ENCODE measurements at regions of chr20 and their contacts with region 1.

Region 1: DNA sequence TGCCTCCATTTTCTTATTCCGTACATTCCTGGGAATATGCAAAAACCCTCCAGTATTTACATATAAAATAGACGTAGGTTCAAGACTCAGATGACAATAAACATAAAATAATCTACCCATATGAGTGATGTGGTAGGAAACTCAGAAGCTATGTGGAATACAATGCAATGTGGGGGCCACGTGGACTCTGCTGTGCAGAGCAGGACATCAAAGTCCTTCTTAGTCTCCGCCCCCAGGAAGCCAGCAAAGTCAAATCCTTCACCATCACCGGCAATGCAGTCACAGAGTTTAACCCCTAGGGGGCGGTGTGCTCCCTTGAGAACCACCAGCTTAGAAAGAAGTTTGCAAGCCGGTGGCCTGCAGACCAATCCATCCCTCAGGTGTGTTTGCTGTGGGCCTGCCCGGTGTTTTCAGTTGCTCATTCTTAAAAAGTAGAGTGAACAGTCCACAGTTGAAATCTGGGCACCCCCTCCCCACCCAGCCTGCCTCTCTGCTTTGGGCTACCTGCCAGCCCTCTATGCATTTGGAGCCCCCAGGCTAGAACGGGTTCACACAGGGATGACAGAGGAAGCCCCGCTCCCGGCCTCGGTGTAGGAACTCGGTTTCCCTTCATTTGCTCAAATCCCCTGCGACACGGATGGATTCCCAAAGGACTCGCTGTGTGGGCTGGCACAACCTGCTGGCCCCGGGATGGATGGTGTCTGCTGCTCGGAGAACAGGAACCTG is 59.9 kb downstream of the SULF2 start:
- DNase-seq: peak; percentile 91
- H3K4me3 Mint-ChIP-seq: no peak overlapping the region
- H3K27ac Mint-ChIP-seq: no peak overlapping the region
- H3K4me1 Mint-ChIP-seq: peaks cover 22% of the 10 kb centered on the region
- H3K27me3 Mint-ChIP-seq: no peaks in the 10 kb centered on the region

Region 2: DNA sequence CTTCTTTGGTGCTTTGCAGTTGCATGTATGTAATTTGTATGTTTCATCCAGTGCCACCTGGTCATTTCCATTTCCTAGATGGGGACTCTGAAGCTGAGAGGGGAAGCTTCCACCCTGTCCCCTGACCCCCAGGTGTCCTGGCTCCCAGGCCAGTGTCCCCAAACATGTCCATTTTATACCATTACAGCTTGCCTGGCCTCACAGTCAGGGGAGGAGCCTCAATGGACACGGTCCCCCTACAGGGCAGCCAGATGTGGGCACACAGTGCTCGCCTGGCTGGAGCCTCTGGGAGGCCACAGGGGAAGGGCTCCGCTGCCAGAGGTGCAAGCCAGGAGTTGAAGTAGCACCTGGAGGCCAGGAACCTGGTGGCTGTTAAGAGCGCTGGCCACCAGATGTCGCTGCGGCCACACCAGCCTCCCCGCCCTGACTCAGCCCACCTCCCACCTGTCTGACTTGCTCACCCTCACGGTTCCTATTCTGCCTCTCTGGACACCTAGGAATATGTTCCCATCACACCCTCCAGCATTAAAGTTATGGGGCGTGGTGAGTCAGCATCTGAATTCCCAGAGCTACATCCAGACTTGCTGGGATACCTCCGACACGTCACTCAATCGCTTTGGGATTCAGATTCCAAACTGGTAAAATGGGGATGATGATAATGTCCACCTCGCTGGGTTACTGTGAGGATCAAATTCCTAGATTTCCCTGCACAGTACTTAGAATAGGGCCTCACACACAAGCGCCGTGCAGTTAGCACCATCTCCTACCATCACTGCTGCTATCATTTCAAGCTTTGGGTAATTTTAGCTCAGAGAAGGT is 47.6 kb before region 1 on chr20:
- CTCF ChIA-PET with region 1: interaction called, 4 read pairs
- intact Hi-C with region 1: loop called (anchors 5 kb)
- DNase-seq: peak; percentile 71
- H3K4me3 Mint-ChIP-seq: no peak overlapping the region
- H3K27ac Mint-ChIP-seq: no peak overlapping the region
- H3K4me1 Mint-ChIP-seq: no peaks in the 10 kb centered on the region
- H3K27me3 Mint-ChIP-seq: no peaks in the 10 kb centered on the region

Region 3: DNA sequence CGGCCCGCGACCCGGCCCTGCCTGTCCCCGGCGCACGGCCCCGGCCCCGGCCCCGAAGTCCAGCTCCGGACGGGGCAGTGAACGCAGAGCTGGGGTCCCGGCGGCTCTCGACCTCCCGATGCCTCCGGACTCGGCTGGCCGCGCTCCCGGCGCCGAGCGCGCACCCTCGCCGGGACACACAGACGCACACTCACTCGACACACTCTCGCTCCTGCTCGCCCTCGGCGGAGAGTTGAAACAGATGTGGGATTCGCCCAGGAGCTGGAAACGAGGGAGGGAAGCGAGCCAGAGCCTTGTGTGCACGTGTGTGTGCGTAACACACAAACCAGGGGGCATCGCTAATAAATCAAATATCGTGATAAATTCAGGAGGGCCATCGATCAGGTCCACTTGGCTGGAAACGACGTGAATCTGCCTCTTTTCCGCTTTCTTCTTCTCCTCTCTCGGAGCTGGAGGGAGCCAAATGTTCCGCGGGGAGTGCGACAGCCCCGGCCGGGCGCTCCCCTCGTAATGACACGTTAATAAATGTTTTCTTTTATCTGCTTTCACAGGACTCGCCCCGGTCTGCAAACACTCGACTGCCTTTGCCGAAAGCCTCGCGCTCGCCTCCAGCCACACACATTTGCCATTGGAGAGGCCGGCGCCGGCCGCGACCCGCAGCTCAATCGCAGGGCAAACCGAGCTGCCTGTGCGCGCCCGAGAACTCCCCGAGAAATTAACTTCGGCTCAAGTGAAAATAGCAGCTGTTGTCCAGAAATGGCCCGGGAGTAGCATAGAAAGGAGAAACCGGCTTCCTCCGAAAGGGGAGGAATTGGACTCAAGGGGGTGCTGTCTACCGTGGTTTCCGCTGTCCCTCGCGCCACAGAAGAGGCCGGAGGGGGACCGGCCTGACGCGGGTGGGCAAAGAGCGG is 60.7 kb after region 1 on chr20:
- CTCF ChIA-PET with region 1: interaction called, 3 read pairs
- intact Hi-C with region 1: loop called (anchors 5 kb)
- DNase-seq: peak; percentile 41
- H3K4me3 Mint-ChIP-seq: peak overlapping the region; percentile 74
- H3K27ac Mint-ChIP-seq: no peak overlapping the region
- H3K4me1 Mint-ChIP-seq: peaks cover 18% of the 10 kb centered on the region
- H3K27me3 Mint-ChIP-seq: peaks cover 48% of the 10 kb centered on the region

Region 4: GRCh38 chr20:48188657-48189551 is 463.5 kb after region 1 on chr20:
- CTCF ChIA-PET with region 1: no interaction called
- intact Hi-C with region 1: loop called (anchors 2 kb)
- DNase-seq: peak; percentile 12
- H3K4me3 Mint-ChIP-seq: no peak overlapping the region
- H3K27ac Mint-ChIP-seq: no peak overlapping the region
- H3K4me1 Mint-ChIP-seq: no peaks in the 10 kb centered on the region
- H3K27me3 Mint-ChIP-seq: no peaks in the 10 kb centered on the region

Measured in activated naive CD4-positive, alpha-beta T cell treated with anti-CD3 and anti-CD28 coated beads for 36 hours (primary cell).